ENCODE measurements at regions of chr4 and their contacts with region 1.

Region 1: GRCh38 chr4:47650584-47651130 is 165.6 kb downstream of the ATP10D start:
- DNase-seq: no peak
- H3K4me3 ChIP-seq: no peak overlapping the region
- CTCF ChIP-seq: no peak

Region 2: DNA sequence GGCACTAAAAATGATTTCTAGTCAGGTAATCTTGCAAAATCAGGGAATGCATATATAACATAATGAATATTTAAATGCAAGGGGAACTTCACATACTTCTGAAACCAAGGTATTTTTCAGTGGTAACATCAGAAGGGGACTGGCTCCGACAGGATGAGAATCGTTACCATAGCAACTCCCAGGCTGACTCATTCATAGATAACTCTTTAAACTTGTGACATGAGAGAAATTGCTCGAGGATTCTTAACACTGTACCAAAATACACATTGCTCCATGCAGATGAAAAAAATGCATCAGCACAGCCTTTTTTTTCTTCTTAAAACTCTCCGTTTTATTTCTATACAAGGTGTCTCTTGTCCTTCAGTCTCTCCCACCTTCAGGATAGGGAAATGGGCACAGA is 505.0 kb before region 1 on chr4:
- CTCF ChIA-PET with region 1: no interaction called
- POLR2A ChIA-PET with region 1: no interaction called
- DNase-seq: peak; percentile 59
- H3K4me3 ChIP-seq: no peak overlapping the region
- CTCF ChIP-seq: no peak

Region 3: GRCh38 chr4:47485047-47485692 is 165.5 kb before region 1 on chr4 and contains the start of gene ATP10D:
- CTCF ChIA-PET with region 1: no interaction called
- POLR2A ChIA-PET with region 1: no interaction called
- DNase-seq: peak; percentile 63
- H3K4me3 ChIP-seq: peak within 1 kb of the TSS; percentile 66
- CTCF ChIP-seq: peak; percentile 49

Region 4: GRCh38 chr4:47668810-47669408 is 18.3 kb after region 1 on chr4:
- CTCF ChIA-PET with region 1: interaction called, 18 read pairs
- POLR2A ChIA-PET with region 1: no interaction called
- DNase-seq: no peak
- H3K4me3 ChIP-seq: no peak overlapping the region
- CTCF ChIP-seq: peak; percentile 60

Region 5: GRCh38 chr4:47686294-47686872 is 35.7 kb after region 1 on chr4:
- CTCF ChIA-PET with region 1: no interaction called
- POLR2A ChIA-PET with region 1: no interaction called
- DNase-seq: no peak
- H3K4me3 ChIP-seq: no peak overlapping the region
- CTCF ChIP-seq: peak; percentile 64